ENCODE measurements at regions of chr17 and their contacts with region 1.

Region 1: DNA sequence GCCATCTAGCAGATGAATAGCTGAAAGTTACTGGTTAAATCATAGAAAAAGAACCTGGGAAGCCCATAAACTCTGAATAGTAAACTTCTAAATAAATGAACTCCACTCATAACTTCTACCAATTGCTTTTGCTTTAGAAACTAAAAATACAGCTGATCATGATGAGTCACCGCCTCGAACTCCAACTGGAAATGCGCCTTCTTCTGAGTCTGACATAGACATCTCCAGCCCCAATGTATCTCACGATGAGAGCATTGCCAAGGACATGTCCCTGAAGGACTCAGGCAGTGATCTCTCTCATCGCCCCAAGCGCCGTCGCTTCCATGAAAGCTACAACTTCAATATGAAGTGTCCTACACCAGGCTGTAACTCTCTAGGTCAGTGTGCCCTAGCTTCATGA is 9.7 kb downstream of the KAT7 start:
- DNase-seq: peak; percentile 12
- H3K4me3 Mint-ChIP-seq: no peak overlapping the region
- H3K27ac Mint-ChIP-seq: no peak overlapping the region
- H3K4me1 Mint-ChIP-seq: peaks cover 46% of the 10 kb centered on the region
- H3K27me3 Mint-ChIP-seq: no peaks in the 10 kb centered on the region

Region 2: GRCh38 chr17:49779739-49780231 is 18.4 kb before region 1 on chr17:
- CTCF ChIA-PET with region 1: no interaction called
- intact Hi-C with region 1: no loop called
- DNase-seq: peak; percentile 60
- H3K4me3 Mint-ChIP-seq: no peak overlapping the region
- H3K27ac Mint-ChIP-seq: no peak overlapping the region
- H3K4me1 Mint-ChIP-seq: no peaks in the 10 kb centered on the region
- H3K27me3 Mint-ChIP-seq: no peaks in the 10 kb centered on the region

Region 3: DNA sequence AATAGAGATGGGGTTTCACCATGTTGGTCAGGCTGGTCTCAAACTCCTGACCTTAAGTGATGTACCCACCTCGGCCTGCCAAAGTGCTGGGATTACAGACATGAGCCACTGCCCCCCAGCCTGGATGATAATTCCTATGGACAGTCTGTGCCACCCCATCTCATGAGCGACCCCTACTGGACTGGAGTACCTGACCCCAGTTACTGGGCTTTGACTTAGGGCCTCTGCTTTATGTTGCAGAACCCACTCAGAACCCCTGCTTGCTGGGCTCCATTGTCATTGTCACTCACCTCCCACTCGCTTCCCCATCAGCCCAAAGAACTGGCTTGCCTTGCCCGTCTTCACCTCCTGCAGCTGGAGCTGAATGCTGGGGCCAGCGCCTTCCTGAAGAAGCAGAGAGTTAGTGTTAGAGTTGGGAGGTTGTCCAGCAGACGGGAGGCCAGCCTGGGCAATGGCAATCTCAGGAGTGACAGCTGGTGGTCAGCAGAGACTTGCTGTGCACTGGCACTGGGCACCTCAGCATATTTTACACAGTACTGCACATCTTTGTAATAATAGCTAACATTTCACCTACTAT is 45.7 kb after region 1 on chr17:
- CTCF ChIA-PET with region 1: no interaction called
- intact Hi-C with region 1: loop called (anchors 5 kb)
- DNase-seq: no peak
- H3K4me3 Mint-ChIP-seq: no peak overlapping the region
- H3K27ac Mint-ChIP-seq: no peak overlapping the region
- H3K4me1 Mint-ChIP-seq: peaks cover 7% of the 10 kb centered on the region
- H3K27me3 Mint-ChIP-seq: no peaks in the 10 kb centered on the region

Measured in activated naive CD4-positive, alpha-beta T cell treated with anti-CD3 and anti-CD28 coated beads for 36 hours (primary cell).